Endothelial cell of umbilical vein (primary cell): ENCODE measurements at regions of chr2 and their contacts with region 1.

Region 1: DNA sequence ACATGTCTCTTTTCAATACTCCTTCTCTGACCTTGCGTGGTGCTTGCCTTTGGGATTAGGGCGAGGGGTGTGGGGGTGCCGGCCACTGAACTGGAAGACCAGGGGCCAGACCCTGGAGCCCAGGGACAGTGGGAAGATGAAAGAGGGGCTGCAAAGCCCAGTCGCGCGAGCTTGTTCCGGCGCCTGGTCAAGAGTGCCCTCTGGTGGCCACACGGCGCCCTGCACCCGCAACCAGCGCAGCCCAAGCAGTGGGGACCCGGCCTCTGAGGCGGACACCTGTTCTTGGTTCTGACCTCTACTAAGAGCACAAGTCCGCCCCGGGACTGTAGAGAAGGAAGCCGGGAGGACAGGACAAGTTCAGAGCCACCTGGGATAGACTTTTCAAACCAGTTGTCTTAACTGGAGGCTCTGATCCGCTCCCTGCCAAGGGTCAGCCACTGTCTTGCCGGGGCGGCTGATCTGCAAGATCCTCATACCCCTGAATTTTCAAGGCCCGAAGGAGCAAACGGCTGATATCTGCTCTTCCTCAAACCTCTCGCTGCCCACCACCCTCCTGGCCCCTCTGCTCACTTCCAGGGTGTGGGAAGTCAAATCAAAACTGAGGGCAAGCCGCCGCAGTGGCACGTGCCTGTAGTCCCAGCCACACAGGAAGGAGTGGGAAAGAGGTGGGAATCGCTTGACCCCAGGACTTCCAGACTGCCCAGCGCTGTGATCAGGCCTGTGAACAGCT is 14.9 kb upstream of the MSH6 start:
- DNase-seq: peak; percentile 63
- H3K4me3 ChIP-seq: no peak overlapping the region
- H3K27ac ChIP-seq: no peak overlapping the region
- H3K4me1 ChIP-seq: no peaks in the 10 kb centered on the region
- H3K27me3 ChIP-seq: no peaks in the 10 kb centered on the region
- CTCF ChIP-seq: peak; percentile 95 to 99
- POLR2A ChIP-seq: no peak

Region 2: DNA sequence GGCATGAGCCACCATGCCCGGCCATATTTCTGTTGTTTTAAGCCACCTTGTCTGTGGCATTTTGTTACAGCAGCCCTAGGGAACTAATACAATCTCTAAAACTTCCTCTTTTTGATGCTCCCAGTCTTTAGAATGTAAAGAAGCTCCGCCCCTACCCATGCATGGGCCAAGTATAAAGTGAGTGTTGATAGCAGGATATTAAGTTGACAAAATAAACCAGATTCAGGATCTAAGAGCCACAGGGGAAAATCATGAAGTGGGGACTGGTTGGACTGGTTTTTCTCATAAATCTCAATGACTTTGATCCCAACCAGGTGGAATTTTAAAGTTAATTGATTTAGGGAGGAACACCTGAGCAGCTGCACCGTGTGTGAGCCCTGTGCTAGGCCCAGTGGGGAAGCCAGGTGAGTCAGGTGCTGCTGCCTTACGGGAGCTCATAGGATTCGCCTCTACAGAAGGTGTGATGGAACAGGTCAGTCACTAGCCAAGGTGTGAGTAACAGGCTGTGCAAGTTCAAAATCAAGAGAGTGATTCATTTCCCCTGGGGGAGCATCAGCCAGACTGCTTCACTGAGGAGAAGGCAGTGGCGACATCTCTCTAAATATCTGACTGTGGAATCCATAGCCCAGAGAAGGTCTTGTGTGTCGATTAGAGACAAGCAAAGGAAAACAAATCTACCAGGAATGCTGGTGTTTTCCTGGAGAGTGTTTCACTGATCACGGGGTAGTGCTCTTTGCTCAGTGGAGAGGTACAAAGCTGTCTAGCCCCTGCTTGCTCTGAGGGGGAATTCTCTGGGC is 428.1 kb before region 1 on chr2:
- CTCF ChIA-PET with region 1: interaction called, 138 read pairs
- POLR2A ChIA-PET with region 1: no interaction called
- dilution Hi-C with region 1: no loop called
- intact Hi-C with region 1: loop called (anchors 1 kb)
- DNase-seq: no peak
- H3K4me3 ChIP-seq: no peak overlapping the region
- H3K27ac ChIP-seq: no peak overlapping the region
- H3K4me1 ChIP-seq: peaks cover 5% of the 10 kb centered on the region
- H3K27me3 ChIP-seq: no peaks in the 10 kb centered on the region
- CTCF ChIP-seq: no peak
- POLR2A ChIP-seq: no peak

Region 3: DNA sequence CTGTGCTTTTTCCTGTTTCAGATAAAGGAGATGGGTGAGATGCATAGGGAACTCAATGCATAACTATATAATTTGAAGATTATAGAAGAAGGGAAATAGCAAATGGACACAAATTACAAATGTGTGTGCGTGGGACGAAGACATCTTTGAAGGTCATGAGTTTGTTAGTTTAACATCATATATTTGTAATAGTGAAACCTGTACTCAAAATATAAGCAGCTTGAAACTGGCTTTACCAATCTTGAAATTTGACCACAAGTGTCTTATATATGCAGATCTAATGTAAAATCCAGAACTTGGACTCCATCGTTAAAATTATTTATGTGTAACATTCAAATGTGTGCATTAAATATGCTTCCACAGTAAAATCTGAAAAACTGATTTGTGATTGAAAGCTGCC is 381.5 kb before region 1 on chr2:
- CTCF ChIA-PET with region 1: interaction called, 41 read pairs
- POLR2A ChIA-PET with region 1: no interaction called
- dilution Hi-C with region 1: no loop called
- intact Hi-C with region 1: loop called (anchors 5 kb)
- DNase-seq: no peak
- H3K4me3 ChIP-seq: no peak overlapping the region
- H3K27ac ChIP-seq: no peak overlapping the region
- H3K4me1 ChIP-seq: no peaks in the 10 kb centered on the region
- H3K27me3 ChIP-seq: peaks cover 2 to 9% of the 10 kb centered on the region in 2 experiments
- CTCF ChIP-seq: no peak
- POLR2A ChIP-seq: no peak

Region 4: GRCh38 chr2:47422560-47422959 is 345.5 kb before region 1 on chr2:
- CTCF ChIA-PET with region 1: interaction called, 12 read pairs
- POLR2A ChIA-PET with region 1: no interaction called
- dilution Hi-C with region 1: no loop called
- intact Hi-C with region 1: no loop called
- DNase-seq: peak; percentile 13
- H3K4me3 ChIP-seq: no peak overlapping the region
- H3K27ac ChIP-seq: peak overlapping the region; percentile 75
- H3K4me1 ChIP-seq: peaks cover 3% of the 10 kb centered on the region
- H3K27me3 ChIP-seq: no peaks in the 10 kb centered on the region
- CTCF ChIP-seq: no peak
- POLR2A ChIP-seq: no peak

Region 5: DNA sequence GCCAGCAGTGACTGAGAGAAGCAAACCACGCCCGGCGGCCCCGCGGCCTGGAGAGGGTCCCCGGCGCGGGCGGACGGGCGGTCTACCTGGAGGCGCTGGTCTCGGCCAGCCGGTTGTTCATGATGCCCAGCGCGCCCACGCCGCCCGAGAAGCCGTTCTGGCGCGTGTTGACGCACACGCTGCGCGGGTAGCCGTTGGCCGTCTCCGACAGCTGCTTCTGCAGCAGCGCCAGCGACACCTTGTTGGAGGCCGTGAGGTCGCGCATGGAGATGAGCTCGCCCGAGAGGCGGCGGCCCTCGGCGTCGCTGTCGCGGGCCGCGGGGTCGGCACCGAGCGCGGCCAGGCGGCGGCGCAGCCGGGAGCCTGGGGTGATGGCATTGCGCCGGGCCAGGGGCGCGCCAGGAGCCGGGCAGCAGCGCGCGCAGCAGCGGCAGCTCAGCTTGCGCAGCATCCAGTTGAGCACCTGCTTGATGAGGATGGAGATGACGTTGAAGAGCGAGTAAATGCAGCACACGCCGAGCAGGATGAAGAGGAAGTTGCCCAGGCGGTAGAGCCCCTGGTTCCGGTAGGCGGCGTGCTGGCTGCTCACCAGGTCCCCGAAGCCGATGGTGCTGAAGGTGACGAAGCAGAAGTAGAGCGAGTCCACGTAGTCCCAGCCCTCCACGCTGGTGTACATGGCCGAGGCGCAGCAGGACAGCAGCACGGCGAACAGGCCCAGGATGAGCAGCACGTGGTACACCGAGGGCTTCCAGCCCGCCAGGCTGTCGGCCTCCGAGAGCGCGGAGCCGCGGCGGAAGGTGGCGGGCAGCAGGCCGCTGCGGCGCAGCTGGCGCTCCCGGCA is 247.0 kb before region 1 on chr2:
- CTCF ChIA-PET with region 1: interaction called, 9 read pairs
- POLR2A ChIA-PET with region 1: no interaction called
- dilution Hi-C with region 1: no loop called
- intact Hi-C with region 1: loop called (anchors 5 kb)
- DNase-seq: peak; percentile 57
- H3K4me3 ChIP-seq: peak overlapping the region; percentile 11 to 17 (median 16)
- H3K27ac ChIP-seq: no peak overlapping the region
- H3K4me1 ChIP-seq: peaks cover 3% of the 10 kb centered on the region
- H3K27me3 ChIP-seq: no peaks in the 10 kb centered on the region
- CTCF ChIP-seq: peak; percentile 12 to 30
- POLR2A ChIP-seq: no peak

Region 6: DNA sequence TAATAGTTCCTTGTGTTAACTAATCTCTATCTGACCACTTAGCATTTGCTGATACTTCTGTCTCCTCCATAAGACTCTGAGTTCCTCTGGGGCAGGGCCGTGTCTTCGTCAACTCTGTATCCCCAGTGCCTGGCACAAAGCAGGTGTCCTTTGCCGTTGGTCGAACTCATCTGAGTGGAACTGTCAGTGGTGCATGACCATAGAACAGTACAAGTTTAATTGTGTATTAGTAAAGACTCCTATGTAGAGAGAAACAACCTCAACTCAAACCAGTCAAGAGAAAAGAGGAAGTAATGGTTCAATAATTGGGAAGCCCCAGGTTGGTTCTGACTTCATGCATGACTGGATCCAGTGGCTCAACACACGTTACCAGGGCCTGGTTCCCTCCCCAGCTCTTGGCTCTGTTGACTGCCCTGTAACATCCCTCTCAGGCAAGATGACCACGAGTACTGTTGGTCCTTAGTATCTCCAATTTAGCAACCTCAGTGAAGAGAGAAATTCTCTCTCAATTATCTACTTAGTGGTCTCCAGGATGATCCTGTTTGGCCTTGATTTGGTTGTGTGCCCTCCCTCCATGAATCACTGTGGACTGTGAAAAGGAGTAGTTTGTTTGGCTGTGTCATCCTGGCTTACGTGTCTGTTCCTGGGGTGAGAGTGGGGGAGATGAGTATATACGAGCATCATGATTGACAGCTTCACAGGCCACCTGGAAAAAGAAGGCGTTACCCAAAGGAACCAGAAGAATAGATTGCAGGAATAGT is 43.6 kb before region 1 on chr2:
- CTCF ChIA-PET with region 1: no interaction called
- POLR2A ChIA-PET with region 1: no interaction called
- dilution Hi-C with region 1: no loop called
- intact Hi-C with region 1: no loop called
- DNase-seq: no peak
- H3K4me3 ChIP-seq: no peak overlapping the region
- H3K27ac ChIP-seq: no peak overlapping the region
- H3K4me1 ChIP-seq: no peaks in the 10 kb centered on the region
- H3K27me3 ChIP-seq: no peaks in the 10 kb centered on the region
- CTCF ChIP-seq: no peak
- POLR2A ChIP-seq: no peak

Region 7: GRCh38 chr2:47751875-47752357 is 16.1 kb before region 1 on chr2:
- CTCF ChIA-PET with region 1: interaction called, 11 read pairs
- POLR2A ChIA-PET with region 1: no interaction called
- dilution Hi-C with region 1: no loop called
- intact Hi-C with region 1: no loop called
- DNase-seq: no peak
- H3K4me3 ChIP-seq: no peak overlapping the region
- H3K27ac ChIP-seq: no peak overlapping the region
- H3K4me1 ChIP-seq: no peaks in the 10 kb centered on the region
- H3K27me3 ChIP-seq: peaks cover 0 to 2% of the 10 kb centered on the region in 2 experiments
- CTCF ChIP-seq: no peak
- POLR2A ChIP-seq: no peak

Region 8: GRCh38 chr2:48107326-48107925 is 339.4 kb after region 1 on chr2:
- CTCF ChIA-PET with region 1: interaction called, 6 read pairs
- POLR2A ChIA-PET with region 1: no interaction called
- dilution Hi-C with region 1: no loop called
- intact Hi-C with region 1: loop called (anchors 1 kb)
- DNase-seq: peak; percentile 76
- H3K4me3 ChIP-seq: no peak overlapping the region
- H3K27ac ChIP-seq: peak overlapping the region; percentile 77
- H3K4me1 ChIP-seq: peaks cover 30% of the 10 kb centered on the region
- H3K27me3 ChIP-seq: no peaks in the 10 kb centered on the region
- CTCF ChIP-seq: no peak
- POLR2A ChIP-seq: no peak